PC-3 (cell line): ENCODE measurements at regions of chr7 and their contacts with region 1.

Region 1: DNA sequence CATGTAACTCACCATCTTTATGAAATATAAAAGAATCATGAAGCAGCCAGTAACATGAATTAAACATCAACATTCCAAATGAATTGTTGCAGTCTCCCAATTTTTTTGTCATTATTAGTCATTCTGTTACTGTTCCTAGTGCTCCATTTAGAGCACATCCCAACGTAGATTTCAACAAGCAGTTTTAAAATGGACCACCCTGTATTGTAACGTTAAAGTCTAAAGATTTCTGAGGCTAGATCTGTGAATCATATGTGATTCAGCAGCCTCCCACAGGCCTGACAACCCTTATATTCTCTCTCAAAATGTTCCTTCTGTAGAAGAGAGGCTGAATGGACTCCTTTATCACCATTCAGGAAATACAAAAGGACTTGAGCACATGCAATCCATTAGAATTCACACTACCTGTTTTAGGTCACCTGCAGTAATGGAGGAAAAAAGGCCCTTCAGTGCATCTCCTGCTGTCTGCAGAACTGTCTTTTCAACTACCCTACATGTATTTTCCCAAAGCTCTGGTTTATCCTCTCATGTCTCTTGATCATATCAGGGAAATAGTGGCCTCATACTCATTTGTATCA is 81.4 kb downstream of the CACNA2D1 start:
- DNase-seq: no peak
- ATAC-seq: no peak
- H3K4me3 ChIP-seq: no peak overlapping the region
- H3K27ac ChIP-seq: no peak overlapping the region
- H3K4me1 ChIP-seq: no peaks in the 10 kb centered on the region
- H3K27me3 ChIP-seq: peaks cover 18% of the 10 kb centered on the region
- CTCF ChIP-seq: no peak

Region 2: DNA sequence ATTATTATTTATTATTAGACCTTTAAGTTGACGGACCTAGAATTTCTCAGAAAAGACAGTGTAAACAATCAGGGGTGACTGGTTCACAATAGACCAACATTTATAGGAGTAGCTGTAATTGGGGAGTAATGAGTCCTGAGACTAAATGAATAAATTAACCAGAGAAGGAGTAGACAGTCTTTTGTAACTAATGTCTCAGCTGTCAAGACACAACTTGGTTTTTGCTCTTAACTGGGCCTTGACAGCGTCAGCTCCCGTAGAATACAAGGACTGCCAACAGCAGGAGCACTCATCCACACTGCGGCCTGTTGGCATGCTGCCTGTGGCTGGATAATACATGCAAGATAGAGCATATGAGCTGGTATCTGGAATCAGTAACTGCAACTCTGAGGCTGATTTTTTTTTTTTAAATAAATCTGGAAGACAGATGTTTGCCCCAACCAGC is 42.5 kb before region 1 on chr7:
- CTCF ChIA-PET with region 1: no interaction called
- POLR2A ChIA-PET with region 1: interaction called, 10 read pairs
- intact Hi-C with region 1: no loop called
- DNase-seq: no peak
- ATAC-seq: peak; percentile 62
- H3K4me3 ChIP-seq: no peak overlapping the region
- H3K27ac ChIP-seq: no peak overlapping the region
- H3K4me1 ChIP-seq: no peaks in the 10 kb centered on the region
- H3K27me3 ChIP-seq: no peaks in the 10 kb centered on the region
- CTCF ChIP-seq: no peak